ENCODE measurements at regions of chr1 and their contacts with region 1.

Region 1: GRCh38 chr1:44049839-44050238 is 18.6 kb upstream of the SLC6A9 start:
- DNase-seq: no peak
- H3K4me3 ChIP-seq: no peak overlapping the region
- H3K4me3 Mint-ChIP-seq: no peak overlapping the region
- H3K27ac ChIP-seq: no peak overlapping the region
- H3K27ac Mint-ChIP-seq: no peak overlapping the region
- H3K4me1 ChIP-seq: no peaks in the 10 kb centered on the region
- H3K4me1 Mint-ChIP-seq: peaks cover 0 to 7% (median 5%) of the 10 kb centered on the region in 3 donors
- H3K27me3 ChIP-seq: no peaks in the 10 kb centered on the region
- H3K27me3 Mint-ChIP-seq: peaks cover 11 to 32% of the 10 kb centered on the region in 2 donors

Region 2: GRCh38 chr1:44036409-44037139 is 13.3 kb before region 1 on chr1:
- CTCF ChIA-PET with region 1: interaction called, 18 read pairs
- POLR2A ChIA-PET with region 1: no interaction called
- DNase-seq: peak; percentile 39 to 75 (median 55)
- H3K4me3 ChIP-seq: no peak overlapping the region
- H3K4me3 Mint-ChIP-seq: peak overlapping the region in 1 of 7 donors; percentile 15
- H3K27ac ChIP-seq: peak overlapping the region; percentile 30
- H3K27ac Mint-ChIP-seq: peak overlapping the region in 2 of 8 donors; percentile 12 to 17
- H3K4me1 ChIP-seq: no peaks in the 10 kb centered on the region
- H3K4me1 Mint-ChIP-seq: peaks cover 0 to 12% (median 11%) of the 10 kb centered on the region in 3 donors
- H3K27me3 ChIP-seq: no peaks in the 10 kb centered on the region
- H3K27me3 Mint-ChIP-seq: peaks cover 0 to 4% of the 10 kb centered on the region in 2 donors

Region 3: GRCh38 chr1:44251989-44252671 is 202.3 kb after region 1 on chr1:
- CTCF ChIA-PET with region 1: no interaction called
- POLR2A ChIA-PET with region 1: no interaction called
- DNase-seq: no peak
- H3K4me3 ChIP-seq: no peak overlapping the region
- H3K4me3 Mint-ChIP-seq: no peak overlapping the region
- H3K27ac ChIP-seq: no peak overlapping the region
- H3K27ac Mint-ChIP-seq: no peak overlapping the region
- H3K4me1 ChIP-seq: no peaks in the 10 kb centered on the region
- H3K4me1 Mint-ChIP-seq: no peaks in the 10 kb centered on the region
- H3K27me3 ChIP-seq: no peaks in the 10 kb centered on the region
- H3K27me3 Mint-ChIP-seq: no peaks in the 10 kb centered on the region